ENCODE measurements at regions of chr9 and their contacts with region 1.

Region 1: DNA sequence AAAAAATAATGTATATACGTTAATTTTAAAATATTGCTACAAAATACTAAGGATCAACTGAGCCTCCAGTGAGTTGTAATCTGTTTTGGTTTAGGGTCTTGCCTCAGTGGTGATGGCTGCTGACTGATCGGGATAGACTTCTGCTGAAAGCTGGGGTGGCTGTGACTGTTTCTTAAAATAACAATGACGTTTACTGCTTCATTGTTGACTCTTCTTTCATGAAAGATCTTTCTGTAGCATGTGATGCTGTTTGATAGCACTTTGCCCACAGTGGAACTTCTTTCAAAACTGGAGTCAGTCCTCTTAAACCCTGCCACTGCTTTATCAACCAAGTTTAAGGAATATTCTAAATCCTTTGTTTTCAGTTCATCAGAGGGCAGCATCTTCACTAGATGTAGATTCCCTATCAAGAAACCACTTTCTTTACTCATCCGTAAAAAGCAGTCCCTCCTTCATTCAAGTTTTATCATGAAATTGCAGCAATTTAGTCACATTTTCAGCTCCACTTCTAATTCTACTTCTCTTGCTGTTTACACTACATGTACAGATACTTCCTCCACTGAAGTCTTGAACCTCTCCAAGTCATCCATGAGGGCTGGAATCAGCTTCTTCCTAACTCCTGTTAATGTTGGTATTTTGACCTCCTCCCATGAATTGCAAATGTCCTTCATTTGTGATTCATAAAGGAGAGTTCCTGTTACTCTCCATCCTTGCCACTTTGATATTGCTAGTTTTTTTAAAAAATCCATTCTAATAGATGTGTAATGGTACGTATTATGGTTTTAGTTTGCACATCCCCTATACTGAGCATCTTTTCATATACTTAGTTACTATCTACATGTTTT is 41.5 kb upstream of the PTPDC1 start:
- DNase-seq: no peak
- ATAC-seq: no peak
- H3K4me3 ChIP-seq: no peak overlapping the region
- H3K27ac ChIP-seq: no peak overlapping the region
- H3K4me1 ChIP-seq: no peaks in the 10 kb centered on the region
- H3K27me3 ChIP-seq: no peaks in the 10 kb centered on the region
- CTCF ChIP-seq: no peak
- POLR2A ChIP-seq: no peak
- RAD21 ChIP-seq: no peak

Region 2: DNA sequence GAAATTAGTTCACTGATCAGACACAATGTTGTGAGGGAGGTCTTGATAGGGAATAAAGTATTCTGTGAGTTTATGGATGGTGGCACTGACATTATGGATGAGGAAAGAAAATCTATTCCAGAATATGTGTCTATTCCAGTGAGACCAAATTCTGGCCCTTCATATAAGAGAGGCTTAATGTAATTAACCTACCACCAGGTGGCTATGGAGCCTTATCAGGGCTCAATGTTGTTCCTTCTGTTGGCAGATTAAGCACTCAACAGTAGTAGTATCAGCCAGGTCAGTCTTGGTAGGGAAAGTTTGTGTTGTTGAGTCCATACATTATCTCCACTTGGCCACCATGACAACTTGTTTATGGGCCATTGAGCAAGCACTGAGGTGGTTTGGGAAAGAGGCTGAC is 45.9 kb before region 1 on chr9:
- CTCF ChIA-PET with region 1: no interaction called
- POLR2A ChIA-PET with region 1: no interaction called
- RAD21 ChIA-PET with region 1: no interaction called
- intact Hi-C with region 1: loop called (anchors 1 kb)
- DNase-seq: no peak
- ATAC-seq: peak; percentile 60
- H3K4me3 ChIP-seq: no peak overlapping the region
- H3K27ac ChIP-seq: no peak overlapping the region
- H3K4me1 ChIP-seq: no peaks in the 10 kb centered on the region
- H3K27me3 ChIP-seq: no peaks in the 10 kb centered on the region
- CTCF ChIP-seq: peak; percentile 11 to 40 (median 17); a peak in 3 of 6 replicates
- POLR2A ChIP-seq: no peak
- RAD21 ChIP-seq: peak; percentile 25; the same call in 1 of the 2 replicates

Region 3: DNA sequence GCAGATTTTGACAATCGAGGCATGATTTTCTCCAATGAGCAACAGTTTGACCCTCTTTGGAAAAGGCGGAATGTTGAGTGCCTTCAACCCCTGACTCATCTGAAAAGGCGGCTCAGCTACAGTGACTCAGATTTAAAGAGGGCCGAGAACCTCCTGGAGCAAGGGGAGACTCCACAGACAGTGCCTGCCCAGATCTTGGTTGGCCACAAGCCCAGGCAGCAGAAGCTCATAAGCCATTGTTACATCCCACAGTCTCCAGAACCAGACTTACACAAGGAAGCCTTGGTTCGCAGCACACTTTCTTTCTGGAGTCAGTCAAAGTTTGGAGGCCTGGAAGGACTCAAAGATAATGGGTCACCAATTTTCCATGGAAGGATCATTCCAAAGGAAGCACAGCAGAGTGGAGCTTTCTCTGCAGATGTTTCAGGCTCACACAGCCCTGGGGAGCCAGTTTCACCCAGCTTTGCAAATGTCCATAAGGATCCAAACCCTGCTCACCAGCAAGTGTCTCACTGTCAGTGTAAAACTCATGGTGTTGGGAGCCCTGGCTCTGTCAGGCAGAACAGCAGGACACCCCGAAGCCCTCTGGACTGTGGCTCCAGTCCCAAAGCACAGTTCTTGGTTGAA is 55.2 kb after region 1 on chr9:
- CTCF ChIA-PET with region 1: no interaction called
- POLR2A ChIA-PET with region 1: no interaction called
- RAD21 ChIA-PET with region 1: no interaction called
- intact Hi-C with region 1: no loop called
- DNase-seq: peak; percentile 75
- ATAC-seq: peak; percentile 95
- H3K4me3 ChIP-seq: peak overlapping the region in 1 of 2 experiments; percentile 9; a peak in 2 of 4 replicates
- H3K27ac ChIP-seq: peak overlapping the region; percentile 53
- H3K4me1 ChIP-seq: peaks cover 27 to 28% of the 10 kb centered on the region in 2 experiments
- H3K27me3 ChIP-seq: no peaks in the 10 kb centered on the region
- CTCF ChIP-seq: no peak
- POLR2A ChIP-seq: no peak
- RAD21 ChIP-seq: no peak